Activated CD4-positive, alpha-beta memory T cell treated with anti-CD3 and anti-CD28 coated beads for 36 hours (primary cell): ENCODE measurements at regions of chr7 and their contacts with region 1.

Region 1: GRCh38 chr7:92528188-92528957 is at the starts of genes PEX1 and RBM48:
- DNase-seq: peak; percentile 98
- H3K4me3 Mint-ChIP-seq: peak within 1 kb of the TSS; percentile 90
- H3K27ac Mint-ChIP-seq: peak within 1 kb of the TSS; percentile 89
- H3K4me1 Mint-ChIP-seq: peaks cover 23% of the 10 kb centered on the region
- H3K27me3 Mint-ChIP-seq: peaks cover 2% of the 10 kb centered on the region
- total RNA-seq, gene PEX1: 16.9 to 17.0 TPM
- total RNA-seq, gene RBM48: 11.7 to 14.0 TPM

Region 2: DNA sequence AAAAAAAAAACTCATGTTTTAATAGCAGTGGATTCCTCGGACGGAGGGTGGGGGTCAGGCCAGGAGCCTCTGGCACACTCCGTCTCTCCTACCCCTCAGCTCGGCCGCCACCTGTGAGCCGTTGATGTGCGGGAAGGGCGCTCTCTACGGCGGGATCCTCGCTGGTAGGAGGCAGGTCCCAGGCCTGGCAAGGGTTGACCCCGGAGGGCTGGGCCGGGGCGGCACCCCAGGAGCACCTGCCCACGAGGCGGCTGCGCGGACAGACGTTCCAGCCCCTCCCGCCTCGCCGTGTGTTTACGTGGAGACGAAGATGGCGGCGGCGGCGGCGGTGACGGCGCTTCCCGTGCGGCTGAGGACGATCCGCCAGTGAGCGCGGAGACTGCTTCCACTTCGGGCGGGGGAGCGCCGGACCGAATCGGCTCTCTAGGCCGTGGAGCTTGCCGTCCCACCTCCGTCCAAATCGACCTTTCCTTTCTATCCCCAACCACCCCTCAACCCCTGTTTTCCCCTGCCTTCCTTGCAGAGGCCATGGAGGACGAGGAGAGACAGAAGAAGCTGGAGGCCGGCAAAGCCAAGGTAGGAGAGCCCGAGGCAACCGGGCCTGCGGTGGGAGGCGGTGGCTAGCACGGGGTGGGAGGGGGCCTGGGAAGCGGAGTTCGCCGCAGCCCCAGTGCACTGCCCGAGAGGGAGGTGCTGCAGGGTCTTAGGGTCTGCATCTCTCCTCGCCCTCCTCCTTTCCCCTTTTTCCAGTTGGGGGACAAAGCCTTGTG is 587.6 kb before region 1 on chr7 and contains the start of gene AKAP9:
- CTCF ChIA-PET with region 1: no interaction called
- POLR2A ChIA-PET with region 1: no interaction called
- intact Hi-C with region 1: loop called (anchors 5 kb)
- DNase-seq: peak; percentile 93
- H3K4me3 Mint-ChIP-seq: peak within 1 kb of the TSS; percentile 92
- H3K27ac Mint-ChIP-seq: peak within 1 kb of the TSS; percentile 86
- H3K4me1 Mint-ChIP-seq: peaks cover 35% of the 10 kb centered on the region
- H3K27me3 Mint-ChIP-seq: peaks cover 1% of the 10 kb centered on the region
- total RNA-seq, gene AKAP9: 23.5 to 25.3 TPM

Region 3: DNA sequence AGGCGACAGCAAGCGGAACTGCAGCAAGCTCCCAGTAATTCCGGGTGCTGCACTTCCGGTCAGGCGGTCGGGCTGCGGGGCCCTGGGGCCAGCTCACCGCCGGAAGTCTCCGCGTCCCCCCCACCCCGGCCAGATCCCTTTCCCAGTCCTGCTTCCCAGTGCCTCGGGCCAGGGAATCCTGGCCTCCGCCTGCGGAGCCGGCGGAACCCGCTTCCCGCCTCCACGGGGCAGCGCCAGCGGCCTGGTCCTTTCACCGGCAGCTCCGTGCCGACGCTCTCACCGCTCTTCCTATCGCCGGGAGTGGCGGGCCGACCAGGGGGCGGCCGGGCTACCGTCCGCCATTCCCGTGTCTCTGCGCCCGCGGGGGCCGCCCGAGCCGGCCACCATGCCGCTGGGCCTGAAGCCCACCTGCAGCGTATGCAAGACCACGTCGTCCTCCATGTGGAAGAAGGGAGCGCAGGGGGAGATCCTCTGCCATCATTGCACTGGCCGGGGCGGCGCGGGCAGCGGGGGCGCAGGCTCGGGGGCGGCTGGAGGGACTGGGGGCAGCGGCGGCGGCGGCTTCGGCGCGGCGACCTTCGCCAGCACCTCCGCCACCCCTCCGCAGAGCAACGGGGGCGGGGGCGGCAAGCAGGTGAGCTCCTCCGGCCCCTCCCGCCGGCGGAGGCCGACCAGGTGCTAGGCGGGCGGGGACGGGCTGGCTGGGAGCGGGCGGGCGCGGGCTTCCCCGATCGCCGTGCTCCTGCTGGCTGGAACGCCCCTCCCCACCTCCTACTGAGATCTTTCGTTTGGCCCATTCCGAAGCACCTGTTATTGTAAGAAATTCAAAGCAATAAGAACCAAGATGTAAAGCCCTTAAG is 80.8 kb before region 1 on chr7 and contains the start of gene GATAD1:
- CTCF ChIA-PET with region 1: interaction called, 18 read pairs
- POLR2A ChIA-PET with region 1: interaction called, 9 read pairs
- intact Hi-C with region 1: loop called (anchors 1 kb)
- DNase-seq: peak; percentile 88
- H3K4me3 Mint-ChIP-seq: peak within 1 kb of the TSS; percentile 82
- H3K27ac Mint-ChIP-seq: peak within 1 kb of the TSS; percentile 81
- H3K4me1 Mint-ChIP-seq: peaks cover 16% of the 10 kb centered on the region
- H3K27me3 Mint-ChIP-seq: no peaks in the 10 kb centered on the region
- total RNA-seq, gene GATAD1: 19.4 to 21.2 TPM

Region 4: DNA sequence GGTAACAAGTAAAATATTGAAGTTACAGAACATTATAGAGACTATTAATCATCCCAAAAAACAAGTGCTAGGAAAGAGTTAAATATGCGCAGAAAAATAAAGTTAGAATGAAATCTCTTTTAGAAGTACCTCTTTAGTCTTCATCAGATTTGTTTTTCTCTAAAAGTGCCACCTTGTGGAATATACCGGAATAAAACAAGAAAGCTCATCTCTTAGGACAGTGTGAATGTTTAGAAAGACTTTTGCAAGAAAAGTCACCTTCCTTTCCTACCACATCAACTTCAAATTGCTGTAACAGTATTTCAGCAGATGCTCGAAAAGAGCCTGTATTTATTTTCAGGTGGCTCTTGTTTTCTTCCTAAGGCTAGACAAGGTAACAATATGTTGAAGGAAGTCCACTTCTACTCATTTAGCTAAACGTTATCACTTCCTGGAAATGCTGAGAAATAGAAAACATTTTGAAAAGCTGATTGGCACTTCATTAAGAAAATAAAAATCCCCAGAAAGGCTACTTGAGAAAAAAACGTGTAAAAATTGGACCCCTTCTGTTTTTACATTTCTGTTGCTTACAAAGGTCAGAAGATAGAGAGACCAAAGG is 81.6 kb after region 1 on chr7:
- CTCF ChIA-PET with region 1: interaction called, 5 read pairs
- POLR2A ChIA-PET with region 1: no interaction called
- intact Hi-C with region 1: loop called (anchors 1 kb)
- DNase-seq: no peak
- H3K4me3 Mint-ChIP-seq: no peak overlapping the region
- H3K27ac Mint-ChIP-seq: peak overlapping the region; percentile 40
- H3K4me1 Mint-ChIP-seq: peaks cover 37% of the 10 kb centered on the region
- H3K27me3 Mint-ChIP-seq: no peaks in the 10 kb centered on the region

Region 5: GRCh38 chr7:92633211-92633906 is 105.0 kb after region 1 on chr7:
- CTCF ChIA-PET with region 1: no interaction called
- POLR2A ChIA-PET with region 1: no interaction called
- intact Hi-C with region 1: no loop called
- DNase-seq: peak; percentile 53
- H3K4me3 Mint-ChIP-seq: peak overlapping the region; percentile 36
- H3K27ac Mint-ChIP-seq: peak overlapping the region; percentile 93
- H3K4me1 Mint-ChIP-seq: peaks cover 81% of the 10 kb centered on the region
- H3K27me3 Mint-ChIP-seq: no peaks in the 10 kb centered on the region

Region 6: GRCh38 chr7:92731335-92732063 is 203.1 kb after region 1 on chr7:
- CTCF ChIA-PET with region 1: no interaction called
- POLR2A ChIA-PET with region 1: no interaction called
- intact Hi-C with region 1: no loop called
- DNase-seq: peak; percentile 71
- H3K4me3 Mint-ChIP-seq: peak overlapping the region; percentile 10
- H3K27ac Mint-ChIP-seq: peak overlapping the region; percentile 96
- H3K4me1 Mint-ChIP-seq: peaks cover 71% of the 10 kb centered on the region
- H3K27me3 Mint-ChIP-seq: no peaks in the 10 kb centered on the region

Region 7: DNA sequence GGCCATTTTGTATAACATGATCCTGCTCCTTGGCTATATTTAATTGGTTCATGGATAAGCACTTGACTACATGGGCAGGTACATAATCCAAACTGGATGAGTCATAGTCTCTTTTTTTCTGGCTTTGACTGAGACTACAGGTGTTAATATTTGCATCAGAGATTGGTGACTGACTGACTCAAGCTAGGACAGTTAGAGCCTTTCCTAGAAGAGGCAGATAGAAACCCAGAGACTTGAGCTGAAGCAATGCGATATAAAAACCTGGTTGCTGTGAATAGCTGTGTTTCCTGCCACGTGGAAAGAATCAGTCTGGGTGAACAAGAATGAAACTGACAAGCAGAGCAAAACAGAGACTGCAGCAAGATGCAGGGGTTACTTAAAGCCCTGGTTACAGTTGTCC is 508.4 kb after region 1 on chr7:
- CTCF ChIA-PET with region 1: interaction called, 3 read pairs
- POLR2A ChIA-PET with region 1: no interaction called
- intact Hi-C with region 1: loop called (anchors 2 kb)
- DNase-seq: peak; percentile 64
- H3K4me3 Mint-ChIP-seq: no peak overlapping the region
- H3K27ac Mint-ChIP-seq: peak overlapping the region; percentile 53
- H3K4me1 Mint-ChIP-seq: peaks cover 22% of the 10 kb centered on the region
- H3K27me3 Mint-ChIP-seq: no peaks in the 10 kb centered on the region